ENCODE measurements at regions of chr15 and their contacts with region 1.

Region 1: GRCh38 chr15:57340682-57341259 is 35.5 kb upstream of the CGNL1 start:
- DNase-seq: no peak
- H3K4me3 ChIP-seq: no peak overlapping the region
- H3K27ac ChIP-seq: no peak overlapping the region
- H3K4me1 ChIP-seq: peaks cover 0 to 2% (median 0%) of the 10 kb centered on the region in 4 experiments; a peak in 2 of 7 replicates
- H3K27me3 ChIP-seq: no peaks in the 10 kb centered on the region
- CTCF ChIP-seq: peak; percentile 35 to 90 (median 79)
- EP300 ChIP-seq: no peak
- POLR2A ChIP-seq: no peak
- RAD21 ChIP-seq: peak; percentile 100

Region 2: DNA sequence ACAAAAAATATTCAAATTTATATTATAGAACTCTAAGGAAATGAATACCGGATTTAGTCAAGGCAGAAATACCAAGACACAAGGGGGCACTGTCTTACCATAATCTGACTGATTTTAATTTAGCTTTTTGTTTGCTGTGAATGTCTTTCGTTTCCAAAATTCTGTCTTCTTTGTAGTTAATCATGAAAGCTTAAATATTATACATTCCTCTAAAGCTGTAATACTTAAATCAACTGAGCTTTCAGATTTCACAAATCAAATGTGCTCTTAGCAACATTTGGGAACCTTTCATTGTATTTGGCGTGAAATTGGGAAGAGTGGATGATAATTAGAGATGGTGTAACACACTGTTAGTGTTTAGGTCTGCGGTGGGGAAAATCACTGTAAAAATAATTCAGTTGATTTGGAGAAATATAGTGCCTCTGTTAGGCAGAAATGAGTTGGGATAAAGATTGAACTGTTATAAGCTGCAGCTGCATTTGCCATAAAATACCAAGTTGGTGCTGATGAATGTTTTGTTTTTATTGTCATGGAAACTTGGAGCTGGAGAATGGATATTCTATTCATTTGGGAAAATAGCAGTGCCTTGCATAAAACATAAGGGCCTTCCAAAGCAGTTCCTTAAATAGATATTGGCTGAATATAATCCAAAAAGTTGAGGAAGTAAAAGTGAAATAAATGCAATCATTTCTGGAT is 194.1 kb before region 1 on chr15:
- CTCF ChIA-PET with region 1: interaction called, 44 read pairs
- POLR2A ChIA-PET with region 1: no interaction called
- DNase-seq: no peak
- H3K4me3 ChIP-seq: no peak overlapping the region
- H3K27ac ChIP-seq: no peak overlapping the region
- H3K4me1 ChIP-seq: no peaks in the 10 kb centered on the region; a peak in 3 of 7 replicates
- H3K27me3 ChIP-seq: no peaks in the 10 kb centered on the region
- CTCF ChIP-seq: peak in 2 of 3 experiments; percentile 47 to 51; a peak in 2 of 4 replicates
- EP300 ChIP-seq: no peak
- POLR2A ChIP-seq: no peak
- RAD21 ChIP-seq: peak; percentile 75 to 86

Region 3: GRCh38 chr15:57364282-57365007 is 23.7 kb after region 1 on chr15:
- CTCF ChIA-PET with region 1: interaction called, 33 read pairs
- POLR2A ChIA-PET with region 1: interaction called, 3 read pairs
- DNase-seq: no peak
- H3K4me3 ChIP-seq: no peak overlapping the region
- H3K27ac ChIP-seq: no peak overlapping the region
- H3K4me1 ChIP-seq: peaks cover 0 to 7% (median 4%) of the 10 kb centered on the region in 4 experiments; a peak in 5 of 7 replicates
- H3K27me3 ChIP-seq: no peaks in the 10 kb centered on the region
- CTCF ChIP-seq: peak; percentile 36 to 54 (median 39); a peak in 3 of 4 replicates
- EP300 ChIP-seq: no peak
- POLR2A ChIP-seq: no peak
- RAD21 ChIP-seq: peak in 1 of 2 experiments; percentile 52; a peak in 2 of 4 replicates

Region 4: DNA sequence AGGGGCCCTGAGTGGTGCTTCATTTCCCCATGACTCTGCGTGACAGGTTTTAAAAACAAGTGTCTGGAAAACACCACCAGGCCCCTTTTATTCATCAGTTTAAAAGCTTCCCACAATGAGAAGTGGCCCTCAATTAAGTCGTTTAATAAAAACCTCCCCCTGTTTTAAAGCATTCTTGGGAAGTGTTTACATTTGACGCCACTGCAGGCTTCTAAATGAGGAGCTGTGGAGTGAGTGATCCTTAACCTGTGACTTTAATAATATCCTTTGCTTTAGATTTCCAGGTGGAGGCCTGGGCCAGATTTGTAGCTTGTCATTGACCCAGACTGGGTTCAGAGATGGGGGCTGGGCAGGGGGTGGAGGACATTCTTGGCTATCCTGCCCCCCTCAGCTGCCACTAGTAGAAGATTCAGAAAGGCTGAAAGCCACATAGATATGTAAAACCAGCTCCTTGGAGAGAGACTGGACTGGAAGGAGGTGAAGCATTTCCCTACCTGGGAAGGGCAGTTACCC is 46.8 kb after region 1 on chr15:
- CTCF ChIA-PET with region 1: interaction called, 19 read pairs
- POLR2A ChIA-PET with region 1: interaction called, 5 read pairs
- DNase-seq: no peak
- H3K4me3 ChIP-seq: peak overlapping the region; percentile 42 to 56 (median 46); a peak in 7 of 8 replicates
- H3K27ac ChIP-seq: peak overlapping the region; percentile 68; the same call in 1 of the 2 replicates
- H3K4me1 ChIP-seq: peaks cover 12 to 45% (median 35%) of the 10 kb centered on the region in 4 experiments; a peak in 6 of 7 replicates
- H3K27me3 ChIP-seq: no peaks in the 10 kb centered on the region
- CTCF ChIP-seq: no peak
- EP300 ChIP-seq: no peak
- POLR2A ChIP-seq: 0 out of 3 replicates have a peak, but pooled peaks of 1 of the 2 experiments have one; percentile 21
- RAD21 ChIP-seq: peak in 1 of 2 experiments; percentile 15; a peak in 1 of 4 replicates

Region 5: DNA sequence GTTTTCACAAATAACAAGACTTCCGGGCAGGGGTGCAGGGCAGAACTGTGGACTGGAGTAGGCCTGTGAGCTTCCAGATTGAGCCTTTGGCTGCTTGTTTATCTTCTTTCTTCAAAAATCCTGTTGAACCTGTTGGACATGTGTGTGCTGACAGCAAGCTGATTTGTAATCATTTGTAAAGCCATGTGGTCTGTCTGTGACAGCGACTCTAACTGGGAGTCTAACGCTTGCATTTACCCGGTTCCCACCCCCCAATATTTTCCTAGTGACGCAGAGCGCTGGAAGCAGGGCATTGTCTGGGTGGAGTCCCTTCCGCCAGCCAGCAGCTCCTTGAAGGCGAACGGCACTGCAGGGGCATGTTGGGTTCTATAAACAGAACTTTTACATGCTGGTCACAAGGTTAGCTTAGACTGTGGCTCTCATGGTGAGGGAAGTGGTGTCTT is 165.2 kb after region 1 on chr15:
- CTCF ChIA-PET with region 1: interaction called, 170 read pairs
- POLR2A ChIA-PET with region 1: no interaction called
- DNase-seq: no peak
- H3K4me3 ChIP-seq: no peak overlapping the region
- H3K27ac ChIP-seq: no peak overlapping the region
- H3K4me1 ChIP-seq: peaks cover 0 to 8% (median 5%) of the 10 kb centered on the region in 4 experiments
- H3K27me3 ChIP-seq: no peaks in the 10 kb centered on the region
- CTCF ChIP-seq: no peak
- EP300 ChIP-seq: no peak
- POLR2A ChIP-seq: no peak
- RAD21 ChIP-seq: no peak

Region 6: GRCh38 chr15:57534281-57534680 is 193.5 kb after region 1 on chr15:
- CTCF ChIA-PET with region 1: interaction called, 302 read pairs
- POLR2A ChIA-PET with region 1: interaction called, 3 read pairs
- DNase-seq: no peak
- H3K4me3 ChIP-seq: no peak overlapping the region
- H3K27ac ChIP-seq: no peak overlapping the region
- H3K4me1 ChIP-seq: peaks cover 0 to 5% (median 3%) of the 10 kb centered on the region in 4 experiments; a peak in 2 of 7 replicates
- H3K27me3 ChIP-seq: no peaks in the 10 kb centered on the region
- CTCF ChIP-seq: no peak
- EP300 ChIP-seq: no peak
- POLR2A ChIP-seq: no peak
- RAD21 ChIP-seq: no peak